H1 (cell line): ENCODE measurements at regions of chr2 and their contacts with region 1.

Region 1: GRCh38 chr2:1591978-1592907 is 152.1 kb downstream of the PXDN start:
- DNase-seq: peak; percentile 82 to 83
- H3K4me3 ChIP-seq: 0 out of 8 replicates have a peak overlapping the region, but pooled peaks of 1 of the 4 experiments have one; percentile 15
- H3K27ac ChIP-seq: no peak overlapping the region
- H3K4me1 ChIP-seq: peaks cover 0 to 16% (median 10%) of the 10 kb centered on the region in 4 experiments; a peak in 6 of 7 replicates
- H3K27me3 ChIP-seq: no peaks in the 10 kb centered on the region
- CTCF ChIP-seq: peak in 2 of 3 experiments; percentile 87 to 93; a peak in 3 of 4 replicates
- EP300 ChIP-seq: no peak
- POLR2A ChIP-seq: no peak
- RAD21 ChIP-seq: peak; percentile 89 to 92

Region 2: GRCh38 chr2:1550658-1551316 is 41.5 kb before region 1 on chr2:
- CTCF ChIA-PET with region 1: interaction called, 16 read pairs
- POLR2A ChIA-PET with region 1: no interaction called
- DNase-seq: peak in 1 of 2 experiments; percentile 91
- H3K4me3 ChIP-seq: no peak overlapping the region
- H3K27ac ChIP-seq: no peak overlapping the region
- H3K4me1 ChIP-seq: no peaks in the 10 kb centered on the region
- H3K27me3 ChIP-seq: peaks cover 0 to 4% (median 3%) of the 10 kb centered on the region in 4 experiments; a peak in 3 of 7 replicates
- CTCF ChIP-seq: peak; percentile 85 to 94 (median 91)
- EP300 ChIP-seq: no peak
- POLR2A ChIP-seq: no peak
- RAD21 ChIP-seq: peak; percentile 71 to 81

Region 3: DNA sequence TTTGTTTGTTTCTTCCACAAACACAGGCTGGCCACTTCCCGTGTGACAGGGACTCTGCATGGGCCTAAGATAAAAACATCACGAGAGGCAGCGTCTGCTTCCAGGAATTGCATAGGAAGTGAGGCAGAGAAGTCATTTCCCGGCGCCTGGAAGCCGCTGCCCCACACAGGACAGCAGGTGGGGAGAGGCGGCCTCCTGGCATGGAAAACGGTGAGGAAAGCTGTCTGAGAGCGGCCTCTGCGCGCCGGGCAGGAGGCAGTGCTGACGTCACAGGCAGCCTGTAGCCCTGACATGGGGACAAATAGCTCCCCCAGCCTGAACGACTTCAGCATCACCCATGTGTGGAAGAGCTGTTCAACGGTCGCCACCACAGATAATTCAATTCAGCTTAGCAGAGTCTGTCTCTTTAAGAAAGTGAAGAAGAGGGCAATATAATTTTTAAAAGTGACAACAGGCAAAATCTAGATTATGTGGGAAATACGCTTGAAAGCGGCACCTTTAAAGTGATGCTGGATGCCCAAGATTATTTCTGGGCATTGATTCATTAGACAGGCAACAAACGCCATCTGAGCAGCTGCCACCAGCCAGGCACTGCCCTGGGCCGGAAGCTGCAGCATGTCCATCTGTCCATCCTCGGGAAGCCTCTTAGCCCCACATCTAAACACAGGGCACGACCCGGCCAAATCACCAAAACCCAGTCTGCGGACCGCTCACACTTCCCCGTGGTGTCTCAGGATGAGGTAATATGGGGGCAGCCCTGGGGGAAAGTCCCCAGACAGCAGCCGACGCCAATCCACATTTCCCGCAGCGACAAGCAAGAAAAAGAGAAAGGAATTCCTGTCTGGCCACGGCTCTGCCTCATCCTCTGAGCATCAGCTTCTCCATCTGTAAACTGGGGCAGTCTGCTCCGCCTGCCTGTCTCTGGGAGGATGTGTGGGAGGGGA is 13.1 kb after region 1 on chr2:
- CTCF ChIA-PET with region 1: interaction called, 18 read pairs
- POLR2A ChIA-PET with region 1: interaction called, 8 read pairs
- DNase-seq: peak in 1 of 2 experiments; percentile 61
- H3K4me3 ChIP-seq: no peak overlapping the region
- H3K27ac ChIP-seq: no peak overlapping the region
- H3K4me1 ChIP-seq: peaks cover 0 to 9% (median 5%) of the 10 kb centered on the region in 4 experiments; a peak in 4 of 7 replicates
- H3K27me3 ChIP-seq: no peaks in the 10 kb centered on the region
- CTCF ChIP-seq: no peak
- EP300 ChIP-seq: no peak
- POLR2A ChIP-seq: no peak
- RAD21 ChIP-seq: no peak

Region 4: GRCh38 chr2:1625208-1625937 is 33.1 kb after region 1 on chr2:
- CTCF ChIA-PET with region 1: interaction called, 26 read pairs
- POLR2A ChIA-PET with region 1: interaction called, 13 read pairs
- DNase-seq: peak; percentile 81 to 86
- H3K4me3 ChIP-seq: peak overlapping the region; percentile 25 to 56 (median 33)
- H3K27ac ChIP-seq: peak overlapping the region; percentile 95
- H3K4me1 ChIP-seq: peaks cover 7 to 19% (median 13%) of the 10 kb centered on the region in 4 experiments
- H3K27me3 ChIP-seq: no peaks in the 10 kb centered on the region; a peak in 1 of 7 replicates
- CTCF ChIP-seq: no peak
- EP300 ChIP-seq: peak in 1 of 2 experiments; percentile 97; a peak in 2 of 3 replicates
- POLR2A ChIP-seq: peak; percentile 75 to 90
- RAD21 ChIP-seq: peak in 1 of 2 experiments; percentile 6; a peak in 1 of 4 replicates

Region 5: DNA sequence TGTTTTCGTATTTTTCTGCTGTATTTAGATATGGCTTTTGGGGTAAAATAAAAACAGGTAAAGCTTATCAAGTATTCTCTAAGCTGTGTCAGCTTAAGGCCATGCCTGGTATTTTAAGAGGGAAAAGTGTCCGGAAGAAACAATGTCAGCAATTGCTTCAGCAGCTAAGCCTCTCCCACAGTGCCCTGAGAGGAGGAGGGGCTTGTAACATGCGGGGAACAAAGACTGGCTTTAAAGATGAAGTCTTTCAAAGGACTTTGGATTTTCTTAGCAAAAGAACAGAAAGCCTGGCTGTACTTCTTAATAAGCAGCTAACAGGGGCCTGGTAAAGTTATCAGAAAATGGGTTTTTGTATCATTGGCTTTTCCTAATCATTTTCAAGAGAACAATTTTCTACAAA is 49.3 kb after region 1 on chr2:
- CTCF ChIA-PET with region 1: interaction called, 68 read pairs
- POLR2A ChIA-PET with region 1: interaction called, 4 read pairs
- DNase-seq: no peak
- H3K4me3 ChIP-seq: no peak overlapping the region
- H3K27ac ChIP-seq: no peak overlapping the region
- H3K4me1 ChIP-seq: peaks cover 0 to 2% (median 0%) of the 10 kb centered on the region in 4 experiments; a peak in 1 of 7 replicates
- H3K27me3 ChIP-seq: no peaks in the 10 kb centered on the region
- CTCF ChIP-seq: no peak
- EP300 ChIP-seq: no peak
- POLR2A ChIP-seq: no peak
- RAD21 ChIP-seq: no peak

Region 6: DNA sequence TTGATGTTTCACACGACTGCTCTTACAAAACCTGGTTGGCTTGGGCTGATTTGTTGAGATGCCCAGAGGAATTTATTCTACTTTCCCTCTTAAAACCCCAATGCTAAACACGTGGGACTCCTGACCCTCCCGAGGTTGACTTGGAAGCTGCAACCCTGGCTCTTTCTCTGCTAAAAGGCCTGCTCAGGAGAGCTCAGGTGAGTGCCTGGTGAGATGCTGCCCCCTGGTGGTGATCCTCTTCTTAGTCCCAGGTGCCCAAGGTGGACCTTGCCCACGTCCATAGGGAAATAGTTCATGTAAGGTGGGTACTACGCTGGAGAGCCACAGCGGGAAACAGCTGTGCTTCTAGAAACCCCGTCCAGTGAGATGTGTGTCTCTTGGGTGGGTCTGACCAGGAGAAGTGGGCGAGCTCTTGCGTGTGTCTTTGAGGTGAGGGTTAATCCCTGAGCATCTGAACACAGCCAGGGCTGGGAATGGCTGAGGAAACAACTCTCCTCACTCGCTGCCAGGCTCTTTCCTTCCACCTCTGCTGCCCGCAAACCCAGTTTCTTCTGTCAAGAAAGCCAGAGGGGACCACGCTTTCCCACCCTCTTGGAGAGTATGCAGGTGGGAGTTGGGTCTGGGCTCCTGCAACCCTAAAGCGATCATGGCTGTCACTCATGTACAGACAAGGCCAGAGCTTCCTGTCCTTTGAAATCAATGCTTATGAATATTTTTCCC is 177.6 kb after region 1 on chr2:
- CTCF ChIA-PET with region 1: interaction called, 48 read pairs
- POLR2A ChIA-PET with region 1: interaction called, 3 read pairs
- DNase-seq: peak; percentile 87 to 95
- H3K4me3 ChIP-seq: no peak overlapping the region
- H3K27ac ChIP-seq: no peak overlapping the region
- H3K4me1 ChIP-seq: peaks cover 3 to 20% (median 14%) of the 10 kb centered on the region in 4 experiments
- H3K27me3 ChIP-seq: no peaks in the 10 kb centered on the region; a peak in 1 of 7 replicates
- CTCF ChIP-seq: peak; percentile 91 to 98 (median 95)
- EP300 ChIP-seq: no peak
- POLR2A ChIP-seq: no peak
- RAD21 ChIP-seq: peak; percentile 98

Region 7: DNA sequence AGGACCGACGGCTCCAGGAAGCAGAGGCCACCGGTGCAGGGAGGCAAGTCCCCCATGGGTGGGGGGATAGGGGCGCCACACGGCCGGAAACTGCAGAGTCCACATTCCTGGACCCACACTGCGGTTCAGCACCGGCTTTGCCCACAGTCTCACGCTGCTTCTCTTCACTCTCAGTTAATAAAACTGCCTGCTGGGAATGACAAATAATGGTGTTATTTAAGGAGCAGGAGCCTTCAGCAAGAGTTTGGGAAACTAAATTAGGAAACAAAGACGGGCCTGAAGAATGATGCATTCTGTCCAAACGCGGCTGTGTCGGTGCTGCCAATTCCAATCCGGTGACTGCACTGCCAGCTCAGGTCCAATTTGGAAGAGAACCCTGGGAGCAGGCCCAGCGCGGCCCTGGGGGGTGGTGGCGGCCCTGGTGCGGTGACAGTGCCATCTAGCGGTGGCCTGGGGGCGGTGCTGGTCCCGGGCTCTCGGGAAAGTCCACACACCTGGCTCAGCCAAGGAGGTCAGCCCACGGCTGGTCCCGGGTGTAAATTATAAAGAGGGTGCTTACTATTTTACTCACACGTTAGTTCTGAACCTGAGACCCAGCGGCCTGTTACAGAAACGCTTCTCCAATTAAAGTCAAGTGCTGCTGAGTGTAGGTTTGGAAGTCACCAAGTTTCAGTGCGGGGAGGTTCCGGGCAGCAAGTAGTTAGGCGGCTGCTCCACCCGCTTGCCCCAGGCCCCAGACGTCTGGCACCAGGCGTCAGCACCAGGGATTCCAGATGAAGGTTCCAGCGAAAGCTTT is 225.2 kb after region 1 on chr2:
- CTCF ChIA-PET with region 1: interaction called, 25 read pairs
- POLR2A ChIA-PET with region 1: no interaction called
- DNase-seq: peak; percentile 38 to 96
- H3K4me3 ChIP-seq: no peak overlapping the region
- H3K27ac ChIP-seq: no peak overlapping the region
- H3K4me1 ChIP-seq: peaks cover 0 to 2% (median 1%) of the 10 kb centered on the region in 4 experiments; a peak in 2 of 7 replicates
- H3K27me3 ChIP-seq: no peaks in the 10 kb centered on the region
- CTCF ChIP-seq: peak; percentile 89 to 91 (median 91)
- EP300 ChIP-seq: 0 out of 3 replicates have a peak, but pooled peaks of 1 of the 2 experiments have one; percentile 62
- POLR2A ChIP-seq: no peak
- RAD21 ChIP-seq: peak; percentile 87 to 93